ENCODE measurements at regions of chr5 and their contacts with region 1.

Region 1: GRCh38 chr5:144028636-144029035 is 141.8 kb downstream of the YIPF5 start:
- DNase-seq: peak in 1 of 5 donors; percentile 14
- ATAC-seq: peak; percentile 84 to 95 (median 90)
- H3K4me3 ChIP-seq: peak overlapping the region in 7 of 12 donors; percentile 6 to 33 (median 21)
- H3K27ac ChIP-seq: peak overlapping the region in 11 of 12 donors; percentile 38 to 86 (median 81)
- H3K4me1 ChIP-seq: peaks cover 0 to 26% (median 0%) of the 10 kb centered on the region in 12 donors
- H3K27me3 ChIP-seq: no peaks in the 10 kb centered on the region
- CTCF ChIP-seq: no peak
- POLR2A ChIP-seq: no peak

Region 2: GRCh38 chr5:143931476-143931875 is 97.2 kb before region 1 on chr5:
- intact Hi-C with region 1: no loop called
- DNase-seq: peak in 2 of 5 donors; percentile 36 to 38
- ATAC-seq: peak in 3 of 4 donors; percentile 83 to 89 (median 87)
- H3K4me3 ChIP-seq: no peak overlapping the region
- H3K27ac ChIP-seq: peak overlapping the region in 1 of 12 donors; percentile 3
- H3K4me1 ChIP-seq: peaks cover 0 to 4% (median 0%) of the 10 kb centered on the region in 12 donors
- H3K27me3 ChIP-seq: no peaks in the 10 kb centered on the region
- CTCF ChIP-seq: no peak
- POLR2A ChIP-seq: no peak

Region 3: GRCh38 chr5:144104110-144104509 is 75.5 kb after region 1 on chr5:
- intact Hi-C with region 1: loop called in 1 of 10 experiments (anchors 10 kb)
- DNase-seq: no peak
- ATAC-seq: no peak
- H3K4me3 ChIP-seq: no peak overlapping the region
- H3K27ac ChIP-seq: no peak overlapping the region
- H3K4me1 ChIP-seq: peaks cover 0 to 11% (median 0%) of the 10 kb centered on the region in 12 donors
- H3K27me3 ChIP-seq: no peaks in the 10 kb centered on the region
- CTCF ChIP-seq: no peak
- POLR2A ChIP-seq: no peak

Region 4: GRCh38 chr5:144142139-144142823 is 113.6 kb after region 1 on chr5:
- intact Hi-C with region 1: loop called in 5 of 10 experiments (anchors 5 to 10 kb)
- DNase-seq: no peak
- ATAC-seq: peak; percentile 51 to 77 (median 62)
- H3K4me3 ChIP-seq: no peak overlapping the region
- H3K27ac ChIP-seq: no peak overlapping the region
- H3K4me1 ChIP-seq: peaks cover 0 to 34% (median 11%) of the 10 kb centered on the region in 12 donors
- H3K27me3 ChIP-seq: no peaks in the 10 kb centered on the region
- CTCF ChIP-seq: peak; percentile 36 to 78 (median 64)
- POLR2A ChIP-seq: no peak

Measured in heart left ventricle (tissue), 16 donors.